AG04449 (cell line): ENCODE measurements at regions of chr15 and their contacts with region 1.

Region 1: GRCh38 chr15:38707802-38708671 is 143.4 kb upstream of the RASGRP1 start:
- DNase-seq: no peak
- H3K4me3 ChIP-seq: no peak overlapping the region
- CTCF ChIP-seq: peak; percentile 70

Region 2: DNA sequence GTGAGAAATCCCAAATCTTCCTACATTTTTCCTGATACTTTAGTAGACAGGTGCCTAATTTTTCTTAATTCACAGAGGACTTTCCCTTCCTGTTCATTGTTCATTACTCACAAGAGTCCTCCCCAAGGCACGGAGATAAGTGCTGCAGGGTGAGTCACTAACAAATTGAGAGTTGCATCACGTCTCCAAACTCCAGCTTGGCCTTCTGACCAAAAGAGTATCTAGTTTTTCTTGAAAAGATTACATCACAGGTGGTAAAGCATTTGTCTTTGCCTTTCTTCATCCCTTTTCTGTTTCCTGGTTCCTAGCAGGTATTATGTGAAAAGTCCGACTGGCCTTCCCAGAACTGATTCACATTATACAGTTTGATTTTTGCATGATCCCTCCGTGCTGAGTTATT is 118.5 kb before region 1 on chr15:
- CTCF ChIA-PET with region 1: no interaction called
- POLR2A ChIA-PET with region 1: no interaction called
- DNase-seq: peak; percentile 57
- H3K4me3 ChIP-seq: no peak overlapping the region
- CTCF ChIP-seq: no peak

Region 3: GRCh38 chr15:38996111-38996631 is 288.1 kb after region 1 on chr15:
- CTCF ChIA-PET with region 1: interaction called, 18 read pairs
- POLR2A ChIA-PET with region 1: no interaction called
- DNase-seq: peak; percentile 95
- H3K4me3 ChIP-seq: no peak overlapping the region
- CTCF ChIP-seq: no peak